ENCODE measurements at regions of chr1 and their contacts with region 1.

Region 1: GRCh38 chr1:245045087-245045881 is 109.5 kb upstream of the KIF26B start:
- DNase-seq: peak in 1 of 2 donors; percentile 57
- ATAC-seq: peak in 1 of 2 donors; percentile 73
- H3K4me3 ChIP-seq: no peak overlapping the region
- H3K27ac ChIP-seq: no peak overlapping the region
- H3K4me1 ChIP-seq: no peaks in the 10 kb centered on the region
- H3K27me3 ChIP-seq: no peaks in the 10 kb centered on the region
- CTCF ChIP-seq: no peak
- POLR2A ChIP-seq: no peak

Region 2: GRCh38 chr1:244599937-244600350 is 445.3 kb before region 1 on chr1:
- in situ Hi-C with region 1: loop called (anchors 5 to 25 kb)
- intact Hi-C with region 1: loop called (anchors 2 kb)
- DNase-seq: peak in 1 of 2 donors; percentile 24
- ATAC-seq: peak; percentile 91 to 95
- H3K4me3 ChIP-seq: no peak overlapping the region
- H3K27ac ChIP-seq: peak overlapping the region in 2 of 4 donors; percentile 43 to 67
- H3K4me1 ChIP-seq: no peaks in the 10 kb centered on the region
- H3K27me3 ChIP-seq: no peaks in the 10 kb centered on the region
- CTCF ChIP-seq: no peak
- POLR2A ChIP-seq: peak in 1 of 2 donors; percentile 27

Region 3: DNA sequence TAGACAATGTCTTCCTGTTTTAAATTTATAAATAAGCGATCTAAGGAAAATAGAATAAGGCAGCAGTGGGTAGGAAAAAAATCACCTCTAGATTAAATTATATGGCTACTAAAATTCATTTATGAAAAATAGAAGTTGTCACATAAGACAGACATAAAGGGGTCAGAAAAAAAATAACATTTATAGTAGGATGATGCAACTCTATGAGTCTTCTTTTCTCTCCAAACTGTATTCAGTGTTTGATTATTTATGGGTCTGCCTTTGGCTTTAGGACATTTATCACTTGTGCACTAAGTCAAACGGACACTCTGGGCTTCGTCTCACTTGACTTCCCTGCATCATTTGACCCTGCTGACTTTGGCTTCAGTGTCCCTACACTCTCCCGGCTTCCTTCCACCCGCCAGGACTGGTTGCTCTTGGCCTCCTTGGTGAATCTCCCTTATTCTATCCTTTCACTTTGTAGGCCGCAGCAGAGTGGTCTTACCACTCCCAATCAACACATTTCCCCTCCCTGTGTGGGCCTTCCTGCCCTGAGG is 439.4 kb before region 1 on chr1:
- in situ Hi-C with region 1: loop called (anchors 5 to 25 kb)
- intact Hi-C with region 1: loop called (anchors 2 kb)
- DNase-seq: no peak
- ATAC-seq: no peak
- H3K4me3 ChIP-seq: no peak overlapping the region
- H3K27ac ChIP-seq: no peak overlapping the region
- H3K4me1 ChIP-seq: no peaks in the 10 kb centered on the region
- H3K27me3 ChIP-seq: no peaks in the 10 kb centered on the region
- CTCF ChIP-seq: no peak
- POLR2A ChIP-seq: no peak

Region 4: DNA sequence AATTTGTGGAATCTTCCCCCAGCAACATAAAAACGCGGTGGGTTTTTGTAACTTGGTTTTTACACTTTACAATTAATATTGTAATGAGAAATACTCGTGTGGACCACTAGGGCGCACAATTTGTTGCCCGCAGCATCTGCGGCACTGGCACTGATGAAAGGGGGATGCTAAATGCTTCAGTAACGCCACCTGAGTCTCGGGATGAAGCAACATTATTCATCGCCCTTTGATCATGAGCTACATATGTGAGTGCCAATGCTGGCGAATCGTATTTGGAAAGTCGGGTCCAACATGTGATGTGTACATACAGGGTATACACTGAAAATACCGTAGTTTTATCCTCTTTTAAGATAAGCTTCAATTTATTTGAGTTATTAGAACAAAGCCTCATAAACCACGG is 244.0 kb before region 1 on chr1:
- in situ Hi-C with region 1: loop called (anchors 5 to 10 kb)
- intact Hi-C with region 1: loop called (anchors 1 kb)
- DNase-seq: no peak
- ATAC-seq: no peak
- H3K4me3 ChIP-seq: no peak overlapping the region
- H3K27ac ChIP-seq: no peak overlapping the region
- H3K4me1 ChIP-seq: no peaks in the 10 kb centered on the region
- H3K27me3 ChIP-seq: no peaks in the 10 kb centered on the region
- CTCF ChIP-seq: peak; percentile 18 to 64 (median 48)
- POLR2A ChIP-seq: no peak

Region 5: DNA sequence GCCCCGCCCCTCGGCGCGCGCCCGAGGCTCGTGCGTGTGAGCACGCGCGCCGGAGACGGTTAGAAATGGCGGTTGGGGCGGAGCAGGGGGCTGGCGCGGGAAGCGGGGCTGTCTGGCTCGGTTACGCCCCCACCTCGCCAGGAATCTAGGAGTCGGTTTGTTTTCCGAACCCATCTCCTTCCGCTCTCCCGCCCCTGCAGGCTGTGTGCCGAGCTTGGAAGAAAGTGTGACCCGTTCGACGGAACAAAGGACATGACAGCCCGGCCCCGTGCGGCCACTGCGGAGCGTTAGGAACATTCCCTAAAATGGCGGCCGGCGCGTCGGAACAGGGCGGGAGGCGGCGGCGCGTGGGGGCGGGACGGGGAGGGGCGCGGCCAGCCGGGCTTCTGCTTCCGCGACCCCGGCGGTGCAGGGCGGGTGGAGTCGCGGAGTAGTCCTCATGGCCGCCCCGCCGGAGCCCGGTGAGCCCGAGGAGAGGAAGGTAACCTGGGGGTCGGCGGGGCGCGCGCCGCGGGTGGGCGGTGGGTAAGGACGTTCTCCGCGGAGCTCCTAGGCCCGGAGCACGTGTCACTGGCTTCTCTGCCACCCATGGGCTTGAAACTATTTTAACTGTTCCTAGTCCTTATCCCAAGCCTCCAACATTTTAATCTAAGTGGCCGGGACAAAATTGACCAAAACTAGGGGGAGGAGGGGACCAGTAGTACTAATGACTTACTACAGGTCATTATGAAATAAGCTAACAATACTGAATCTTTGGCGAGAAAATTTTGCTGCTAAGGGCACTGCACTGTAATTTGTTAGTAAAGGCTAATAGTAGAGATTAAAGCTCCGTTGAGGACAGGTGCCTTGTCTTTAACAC is 209.8 kb before region 1 on chr1 and contains the start of gene COX20:
- in situ Hi-C with region 1: no loop called
- intact Hi-C with region 1: loop called (anchors 10 kb)
- DNase-seq: peak; percentile 74 to 88
- ATAC-seq: peak; percentile 70 to 80
- H3K4me3 ChIP-seq: peak within 1 kb of the TSS; percentile 68 to 81 (median 76)
- H3K27ac ChIP-seq: peak within 1 kb of the TSS; percentile 96 to 99 (median 99)
- H3K4me1 ChIP-seq: peaks cover 11 to 33% of the 10 kb centered on the region in 2 donors
- H3K27me3 ChIP-seq: no peaks in the 10 kb centered on the region
- CTCF ChIP-seq: peak in 1 of 5 experiments; percentile 14
- POLR2A ChIP-seq: peak; percentile 65 to 66
- total RNA-seq, gene COX20: 22.7 to 72.0 (median 35.4) TPM

Region 6: DNA sequence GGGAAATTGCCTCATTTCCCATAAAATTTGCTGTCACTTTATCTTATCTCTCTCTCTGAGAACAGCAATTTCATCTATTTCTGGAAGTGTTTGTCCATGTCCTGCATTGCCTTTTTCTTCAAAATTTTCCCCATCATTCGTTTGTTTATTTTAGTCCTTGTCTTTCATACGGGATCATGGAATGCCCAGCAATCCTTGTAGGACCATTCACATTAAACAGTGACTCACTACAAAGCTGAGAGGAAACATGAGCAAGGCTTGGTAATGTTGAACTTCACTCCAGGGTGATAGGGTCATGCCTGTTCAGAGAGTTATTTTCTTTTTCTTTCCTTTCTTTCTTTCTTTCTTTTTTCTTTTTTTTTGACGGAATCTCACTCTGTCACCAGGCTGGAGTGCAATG is 148.7 kb before region 1 on chr1:
- in situ Hi-C with region 1: loop called in 1 of 4 experiments (anchors 25 kb)
- intact Hi-C with region 1: no loop called
- DNase-seq: no peak
- ATAC-seq: no peak
- H3K4me3 ChIP-seq: no peak overlapping the region
- H3K27ac ChIP-seq: no peak overlapping the region
- H3K4me1 ChIP-seq: peaks cover 12 to 13% of the 10 kb centered on the region in 2 donors
- H3K27me3 ChIP-seq: no peaks in the 10 kb centered on the region
- CTCF ChIP-seq: no peak
- POLR2A ChIP-seq: no peak

Region 7: GRCh38 chr1:244970661-244971551 is 74.4 kb before region 1 on chr1:
- in situ Hi-C with region 1: no loop called
- intact Hi-C with region 1: loop called (anchors 2 kb)
- DNase-seq: peak; percentile 93 to 97
- ATAC-seq: peak; percentile 78 to 83
- H3K4me3 ChIP-seq: peak overlapping the region; percentile 67 to 84 (median 79)
- H3K27ac ChIP-seq: peak overlapping the region; percentile 98 to 100 (median 98)
- H3K4me1 ChIP-seq: peaks cover 20 to 22% of the 10 kb centered on the region in 2 donors
- H3K27me3 ChIP-seq: no peaks in the 10 kb centered on the region
- CTCF ChIP-seq: peak; percentile 29 to 75 (median 63)
- POLR2A ChIP-seq: peak; percentile 73 to 80